ENCODE measurements at regions of chr21 and their contacts with region 1.

Region 1: DNA sequence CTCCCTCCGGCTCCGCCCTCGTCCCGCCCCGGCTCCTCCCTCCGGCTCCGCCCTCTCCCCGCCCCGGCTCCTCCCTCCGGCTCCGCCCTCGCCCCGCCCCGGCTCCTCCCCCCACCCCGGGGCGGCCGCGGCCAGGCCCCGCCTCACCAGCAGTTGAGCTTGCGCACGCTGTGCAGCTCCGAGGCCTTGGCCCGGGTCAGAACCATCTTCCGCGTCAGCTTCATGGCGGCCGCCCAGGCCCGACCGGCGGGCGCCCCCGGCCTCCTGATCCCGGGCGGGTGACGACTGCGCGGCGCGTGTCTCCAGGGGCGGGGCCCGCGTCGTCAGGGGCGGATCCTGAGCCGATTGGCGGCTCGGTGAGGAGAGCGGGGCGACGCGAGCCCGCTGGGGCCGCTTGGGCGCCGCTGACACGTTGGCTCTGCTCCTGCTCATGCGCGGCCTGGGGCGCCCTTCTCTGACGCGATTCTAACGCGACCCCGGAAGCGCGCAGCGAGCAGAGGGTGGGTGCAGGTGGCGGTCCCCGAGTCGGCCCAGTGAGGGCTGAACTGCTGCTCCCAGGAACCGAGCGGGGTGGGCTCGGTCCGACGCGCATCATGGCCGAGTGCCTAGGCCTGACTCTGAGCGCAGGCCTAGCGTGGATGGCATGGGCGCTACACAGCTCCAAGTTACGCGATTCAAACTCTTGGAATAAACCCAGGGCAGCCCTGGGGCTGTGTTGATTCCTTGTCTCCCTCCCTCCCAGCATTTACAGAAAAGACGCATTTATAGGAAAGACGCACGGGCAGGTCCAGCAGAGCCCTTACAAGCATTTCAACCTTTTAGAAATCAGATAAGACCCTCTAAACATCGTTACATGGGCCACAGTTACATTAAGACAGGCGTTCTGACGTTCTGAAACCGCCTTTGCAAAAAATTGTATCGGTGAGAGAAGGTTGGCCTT is at the start of gene CFAP410:
- DNase-seq: peak; percentile 96
- ATAC-seq: peak; percentile 97
- H3K4me3 Mint-ChIP-seq: peak within 1 kb of the TSS; percentile 91
- H3K27ac Mint-ChIP-seq: peak within 1 kb of the TSS; percentile 96
- H3K4me1 Mint-ChIP-seq: peaks cover 11% of the 10 kb centered on the region
- H3K27me3 Mint-ChIP-seq: no peaks in the 10 kb centered on the region
- total RNA-seq, gene CFAP410: 23.7 TPM

Region 2: GRCh38 chr21:44353191-44353970 is 14.1 kb after region 1 on chr21 and contains the start of gene TRPM2:
- POLR2A ChIA-PET with region 1: interaction called, 60 read pairs
- DNase-seq: peak; percentile 69
- ATAC-seq: peak; percentile 88
- H3K4me3 Mint-ChIP-seq: peak within 1 kb of the TSS; percentile 92
- H3K27ac Mint-ChIP-seq: peak within 1 kb of the TSS; percentile 93
- H3K4me1 Mint-ChIP-seq: peaks cover 48% of the 10 kb centered on the region
- H3K27me3 Mint-ChIP-seq: peaks cover 18% of the 10 kb centered on the region
- total RNA-seq, gene TRPM2: 29.6 to 31.1 TPM

Region 3: GRCh38 chr21:44379991-44380908 is 41.0 kb after region 1 on chr21:
- POLR2A ChIA-PET with region 1: no interaction called
- DNase-seq: no peak
- ATAC-seq: no peak
- H3K4me3 Mint-ChIP-seq: no peak overlapping the region
- H3K27ac Mint-ChIP-seq: no peak overlapping the region
- H3K4me1 Mint-ChIP-seq: peaks cover 12% of the 10 kb centered on the region
- H3K27me3 Mint-ChIP-seq: peaks cover 4% of the 10 kb centered on the region

Region 4: DNA sequence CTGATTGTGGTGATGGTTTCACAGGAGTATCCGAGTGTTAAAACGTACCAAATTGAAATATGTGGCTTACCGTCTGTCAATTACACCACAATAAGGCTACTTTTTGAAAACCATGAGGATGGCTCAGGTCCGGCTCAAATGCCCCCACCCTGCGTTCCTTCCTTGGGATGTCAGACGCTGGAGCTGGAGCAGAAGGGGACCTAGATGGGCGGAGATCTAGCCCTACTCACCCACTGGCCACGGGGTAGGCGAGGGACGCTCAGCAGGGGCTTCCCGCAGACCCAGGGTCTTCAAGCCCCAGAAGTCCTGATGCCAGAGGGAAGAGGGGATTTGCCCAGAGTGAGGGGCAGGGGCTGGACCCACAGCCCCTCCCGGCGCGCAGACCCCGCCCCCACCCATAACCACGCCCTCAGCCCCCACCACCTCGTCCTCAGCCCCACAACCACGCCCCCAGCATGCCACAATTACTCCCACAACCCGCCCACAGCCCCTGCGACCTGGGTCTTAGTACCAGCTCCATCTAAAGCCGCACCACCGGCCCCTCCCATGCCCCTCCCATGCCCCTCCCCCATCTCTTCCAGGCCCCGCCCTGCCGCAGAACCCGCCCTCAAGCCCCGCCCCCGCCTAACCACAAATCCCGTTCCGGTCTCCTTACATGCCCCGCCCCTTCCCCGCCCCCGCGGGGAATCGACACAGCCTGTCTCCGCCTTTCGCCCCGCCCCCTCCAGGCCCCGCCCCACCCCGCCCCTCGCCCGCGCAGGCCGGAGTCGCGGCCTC is 115.7 kb after region 1 on chr21 and contains the start of gene LRRC3:
- POLR2A ChIA-PET with region 1: interaction called, 11 read pairs
- DNase-seq: peak; percentile 87
- ATAC-seq: peak; percentile 57
- H3K4me3 Mint-ChIP-seq: peak within 1 kb of the TSS; percentile 78
- H3K27ac Mint-ChIP-seq: peak within 1 kb of the TSS; percentile 60
- H3K4me1 Mint-ChIP-seq: no peaks in the 10 kb centered on the region
- H3K27me3 Mint-ChIP-seq: peaks cover 26% of the 10 kb centered on the region
- total RNA-seq, gene LRRC3: 3.0 to 3.5 TPM